CD8-positive, alpha-beta T cell (primary cell): ENCODE measurements at regions of chr21 and their contacts with region 1.

Region 1: GRCh38 chr21:33588485-33589335 is at the start of gene DONSON:
- DNase-seq: peak; percentile 72 to 94 (median 87)
- ATAC-seq: peak; percentile 94
- H3K4me3 ChIP-seq: peak within 1 kb of the TSS; percentile 82 to 91
- H3K4me3 Mint-ChIP-seq: peak within 1 kb of the TSS; percentile 95
- H3K27ac ChIP-seq: peak within 1 kb of the TSS; percentile 53 to 61
- H3K27ac Mint-ChIP-seq: peak within 1 kb of the TSS; percentile 87
- H3K4me1 ChIP-seq: peaks cover 14% of the 10 kb centered on the region
- H3K4me1 Mint-ChIP-seq: peaks cover 16% of the 10 kb centered on the region
- H3K27me3 ChIP-seq: no peaks in the 10 kb centered on the region
- H3K27me3 Mint-ChIP-seq: no peaks in the 10 kb centered on the region
- CTCF ChIP-seq: no peak
- total RNA-seq, gene DONSON: 11.0 to 11.9 TPM

Region 2: GRCh38 chr21:33479679-33480480 is 108.8 kb before region 1 on chr21 and contains the start of gene TMEM50B:
- CTCF ChIA-PET with region 1: no interaction called
- POLR2A ChIA-PET with region 1: interaction called, 13 read pairs
- intact Hi-C with region 1: loop called (anchors 2 to 5 kb)
- DNase-seq: peak; percentile 94 to 98 (median 95)
- ATAC-seq: peak; percentile 87
- H3K4me3 ChIP-seq: peak within 1 kb of the TSS; percentile 79 to 88
- H3K4me3 Mint-ChIP-seq: peak within 1 kb of the TSS; percentile 89
- H3K27ac ChIP-seq: peak within 1 kb of the TSS; percentile 83 to 87
- H3K27ac Mint-ChIP-seq: peak within 1 kb of the TSS; percentile 96
- H3K4me1 ChIP-seq: peaks cover 13% of the 10 kb centered on the region
- H3K4me1 Mint-ChIP-seq: peaks cover 28% of the 10 kb centered on the region
- H3K27me3 ChIP-seq: no peaks in the 10 kb centered on the region
- H3K27me3 Mint-ChIP-seq: no peaks in the 10 kb centered on the region
- CTCF ChIP-seq: peak; percentile 31
- total RNA-seq, gene TMEM50B: 32.6 to 34.0 TPM